K562 (cell line): ENCODE measurements at regions of chr11 and their contacts with region 1.

Region 1: DNA sequence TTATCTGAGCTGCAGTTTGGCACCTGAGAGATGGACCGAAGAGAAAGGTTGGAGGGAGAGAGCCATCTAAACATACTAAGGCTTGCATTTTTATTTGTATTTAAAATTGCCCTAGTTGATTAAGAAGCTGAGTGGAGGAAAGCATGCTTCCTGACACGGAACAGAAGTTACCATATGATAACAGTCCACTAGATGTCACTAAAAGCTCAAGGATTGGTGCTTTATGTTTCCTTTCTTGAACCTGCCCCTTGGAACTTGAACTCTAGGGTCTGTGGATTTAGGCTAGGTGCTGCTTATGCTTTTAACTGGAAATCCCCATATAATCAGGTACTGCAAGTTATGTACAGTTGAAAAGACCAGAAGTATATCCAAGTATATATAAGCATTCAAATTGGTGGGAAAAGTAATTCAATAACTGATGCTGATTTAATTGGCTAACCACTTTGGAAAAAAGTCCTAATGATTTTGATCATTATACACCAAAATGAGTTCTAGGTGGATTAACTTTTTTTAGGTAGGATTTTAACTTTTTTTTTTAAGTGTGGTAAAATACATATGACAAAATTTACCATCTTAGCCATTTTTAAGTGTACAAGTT is 9.5 kb downstream of the RBMXL2 start:
- DNase-seq: peak; percentile 46 to 67 (median 56)
- ATAC-seq: peak; percentile 93
- H3K4me3 ChIP-seq: no peak overlapping the region
- H3K27ac ChIP-seq: no peak overlapping the region
- H3K4me1 ChIP-seq: no peaks in the 10 kb centered on the region
- H3K27me3 ChIP-seq: no peaks in the 10 kb centered on the region
- CTCF ChIP-seq: peak; percentile 63 to 87 (median 65); a peak in 5 of 6 replicates
- EP300 ChIP-seq: no peak
- POLR2A ChIP-seq: no peak
- RAD21 ChIP-seq: peak; percentile 91

Region 2: GRCh38 chr11:7077101-7077500 is 21.2 kb before region 1 on chr11:
- CTCF ChIA-PET with region 1: no interaction called
- POLR2A ChIA-PET with region 1: no interaction called
- in situ Hi-C with region 1: no loop called
- intact Hi-C with region 1: no loop called
- DNase-seq: peak in 2 of 4 experiments; percentile 6 to 11
- ATAC-seq: no peak
- H3K4me3 ChIP-seq: no peak overlapping the region
- H3K27ac ChIP-seq: no peak overlapping the region
- H3K4me1 ChIP-seq: peaks cover 4 to 14% of the 10 kb centered on the region in 2 experiments; a peak in 4 of 5 replicates
- H3K27me3 ChIP-seq: no peaks in the 10 kb centered on the region
- CTCF ChIP-seq: no peak
- EP300 ChIP-seq: no peak
- POLR2A ChIP-seq: no peak
- RAD21 ChIP-seq: no peak

Region 3: DNA sequence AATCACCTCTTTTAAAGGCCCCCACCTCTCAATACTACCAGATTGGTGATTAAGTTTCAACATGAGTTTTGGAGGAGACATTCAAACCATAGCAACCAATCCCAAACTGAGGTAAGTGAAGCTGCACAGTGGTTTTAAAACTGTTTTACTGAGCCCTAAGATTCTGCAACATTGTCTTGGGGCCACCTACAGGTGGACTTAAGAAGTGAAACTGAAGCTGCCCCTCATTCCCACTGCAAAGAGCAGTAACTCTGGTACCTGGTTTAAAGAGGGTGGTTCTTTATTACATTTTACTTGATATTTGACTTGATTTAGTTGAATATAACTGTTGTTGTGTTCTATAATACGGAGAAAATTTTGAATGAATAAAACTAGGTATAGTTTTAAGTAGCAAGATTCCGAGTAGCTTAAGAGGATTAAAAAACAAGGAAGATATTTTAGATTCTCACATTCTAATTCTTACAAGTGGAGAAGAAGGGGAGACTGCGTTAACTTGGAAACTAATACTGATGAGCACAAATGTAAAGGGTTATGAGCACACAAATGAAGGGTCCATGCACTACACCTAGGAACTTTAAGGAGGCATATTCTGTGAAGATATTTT is 180.1 kb after region 1 on chr11:
- CTCF ChIA-PET with region 1: no interaction called
- POLR2A ChIA-PET with region 1: no interaction called
- in situ Hi-C with region 1: no loop called
- intact Hi-C with region 1: loop called (anchors 2 kb)
- DNase-seq: peak; percentile 30 to 46 (median 37)
- ATAC-seq: peak; percentile 70
- H3K4me3 ChIP-seq: no peak overlapping the region
- H3K27ac ChIP-seq: no peak overlapping the region
- H3K4me1 ChIP-seq: no peaks in the 10 kb centered on the region
- H3K27me3 ChIP-seq: no peaks in the 10 kb centered on the region
- CTCF ChIP-seq: peak; percentile 49 to 57 (median 53); a peak in 5 of 6 replicates
- EP300 ChIP-seq: no peak
- POLR2A ChIP-seq: no peak
- RAD21 ChIP-seq: peak; percentile 47 to 62

Region 4: DNA sequence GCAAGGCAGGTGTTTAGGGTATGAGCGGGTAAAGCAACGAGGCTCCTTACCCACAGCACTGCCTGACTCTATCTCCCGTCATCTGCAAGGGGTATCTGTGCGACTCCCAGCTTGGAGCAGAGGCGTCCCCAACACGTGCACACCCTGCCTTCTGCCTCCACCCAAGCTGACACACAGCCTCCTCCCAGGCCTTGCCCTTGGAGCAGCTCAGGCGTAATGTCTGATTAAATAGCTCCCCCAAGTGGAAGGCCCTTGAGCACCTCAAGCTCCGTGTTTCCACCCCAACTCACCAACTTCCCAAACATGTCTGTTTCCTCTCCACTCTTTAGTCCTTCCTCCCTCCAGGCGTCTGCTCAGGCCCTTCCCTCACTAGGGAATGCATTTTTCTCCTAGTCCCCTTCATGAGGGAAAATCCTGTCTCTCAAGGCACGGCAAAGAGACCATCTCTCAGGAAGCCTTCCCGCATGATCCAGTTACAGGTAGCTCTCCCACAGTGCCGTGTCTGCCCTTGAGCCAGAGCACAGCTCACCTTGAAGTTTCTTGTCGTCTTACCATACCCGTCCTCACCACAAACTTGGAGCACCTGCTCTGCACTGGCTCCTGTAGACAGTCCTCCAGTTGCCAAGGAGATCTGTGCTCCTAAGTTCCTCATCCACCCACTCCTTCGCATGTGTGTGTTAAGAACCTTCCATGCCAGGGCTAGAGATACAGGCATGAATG is 559.1 kb after region 1 on chr11:
- CTCF ChIA-PET with region 1: interaction called, 4 read pairs
- POLR2A ChIA-PET with region 1: no interaction called
- in situ Hi-C with region 1: loop called (anchors 25 kb)
- intact Hi-C with region 1: loop called (anchors 2 kb)
- DNase-seq: peak; percentile 35 to 76 (median 48)
- ATAC-seq: peak; percentile 99
- H3K4me3 ChIP-seq: no peak overlapping the region
- H3K27ac ChIP-seq: no peak overlapping the region
- H3K4me1 ChIP-seq: no peaks in the 10 kb centered on the region
- H3K27me3 ChIP-seq: peaks cover 0 to 24% of the 10 kb centered on the region in 2 experiments; a peak in 2 of 5 replicates
- CTCF ChIP-seq: peak; percentile 67 to 87 (median 70)
- EP300 ChIP-seq: no peak
- POLR2A ChIP-seq: no peak
- RAD21 ChIP-seq: peak; percentile 86 to 92

Region 5: GRCh38 chr11:7690648-7691047 is 592.3 kb after region 1 on chr11:
- CTCF ChIA-PET with region 1: interaction called, 4 read pairs
- POLR2A ChIA-PET with region 1: no interaction called
- in situ Hi-C with region 1: no loop called
- intact Hi-C with region 1: loop called (anchors 10 kb)
- DNase-seq: no peak
- ATAC-seq: no peak
- H3K4me3 ChIP-seq: no peak overlapping the region
- H3K27ac ChIP-seq: no peak overlapping the region
- H3K4me1 ChIP-seq: no peaks in the 10 kb centered on the region
- H3K27me3 ChIP-seq: peaks cover 0 to 4% of the 10 kb centered on the region in 2 experiments; a peak in 2 of 5 replicates
- CTCF ChIP-seq: no peak
- EP300 ChIP-seq: no peak
- POLR2A ChIP-seq: no peak
- RAD21 ChIP-seq: no peak

Region 6: DNA sequence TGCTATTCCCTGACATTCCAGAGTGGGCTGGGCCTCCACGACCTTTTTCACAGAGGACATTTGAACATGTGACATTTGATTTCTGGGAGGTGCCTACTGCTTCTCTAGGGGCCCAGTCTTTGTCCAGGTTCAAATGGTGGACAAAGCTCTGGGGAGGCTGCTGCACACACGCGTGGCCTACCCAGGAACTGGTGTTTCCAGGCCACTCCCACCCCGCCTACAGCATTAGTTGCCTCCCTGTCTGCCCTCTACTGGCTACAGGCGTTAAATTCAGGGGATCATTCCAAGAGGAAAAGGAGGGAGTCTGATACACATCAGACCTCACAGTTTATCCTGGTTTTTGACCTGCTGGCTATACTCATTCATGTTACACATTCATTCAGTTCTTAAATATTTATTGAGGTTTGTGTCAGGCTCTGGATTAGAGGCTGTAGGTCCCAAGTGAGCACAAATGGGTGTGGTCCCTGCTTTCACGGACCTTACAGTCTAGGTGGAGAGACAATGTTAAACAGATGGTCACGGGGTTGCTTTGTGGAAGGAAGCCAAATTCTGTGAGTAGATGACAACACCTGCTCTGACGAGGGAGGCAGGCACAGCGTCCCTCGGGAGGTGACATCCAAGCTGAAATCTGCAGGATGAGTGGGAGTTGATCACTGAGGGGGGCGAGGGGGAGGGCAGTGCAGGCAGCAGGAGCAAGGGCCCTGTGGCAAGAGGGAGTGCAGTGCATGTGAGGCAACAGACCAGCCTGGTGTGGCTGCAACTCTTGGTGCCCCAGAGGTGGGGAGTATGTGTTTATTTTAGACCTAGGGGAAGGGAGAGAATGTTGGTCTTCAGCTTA is 994.5 kb after region 1 on chr11:
- CTCF ChIA-PET with region 1: no interaction called
- POLR2A ChIA-PET with region 1: no interaction called
- in situ Hi-C with region 1: no loop called
- intact Hi-C with region 1: loop called (anchors 5 kb)
- DNase-seq: peak; percentile 73 to 88 (median 82)
- ATAC-seq: peak; percentile 94
- H3K4me3 ChIP-seq: no peak overlapping the region
- H3K27ac ChIP-seq: no peak overlapping the region
- H3K4me1 ChIP-seq: peaks cover 0 to 3% of the 10 kb centered on the region in 2 experiments; a peak in 2 of 5 replicates
- H3K27me3 ChIP-seq: peaks cover 0 to 51% of the 10 kb centered on the region in 2 experiments; a peak in 3 of 5 replicates
- CTCF ChIP-seq: peak; percentile 75 to 77 (median 75)
- EP300 ChIP-seq: no peak
- POLR2A ChIP-seq: no peak
- RAD21 ChIP-seq: peak; percentile 32 to 47